Left cardiac atrium (tissue), 4 donors: ENCODE measurements at regions of chr15 and their contacts with region 1.

Region 1: GRCh38 chr15:74460871-74461846 is at the start of gene UBL7:
- DNase-seq: peak; percentile 98
- ATAC-seq: peak; percentile 99
- total RNA-seq, gene UBL7: 39.0 to 43.5 TPM

Region 2: GRCh38 chr15:73522011-73522410 is 939.1 kb before region 1 on chr15:
- intact Hi-C with region 1: no loop called
- DNase-seq: no peak
- ATAC-seq: no peak

Region 3: GRCh38 chr15:74540761-74541493 is 79.8 kb after region 1 on chr15 and contains the start of gene ARID3B:
- intact Hi-C with region 1: loop called in 1 of 2 experiments (anchors 2 kb)
- DNase-seq: peak; percentile 99
- ATAC-seq: peak; percentile 99
- total RNA-seq, gene ARID3B: 2.1 to 2.6 TPM

Region 4: DNA sequence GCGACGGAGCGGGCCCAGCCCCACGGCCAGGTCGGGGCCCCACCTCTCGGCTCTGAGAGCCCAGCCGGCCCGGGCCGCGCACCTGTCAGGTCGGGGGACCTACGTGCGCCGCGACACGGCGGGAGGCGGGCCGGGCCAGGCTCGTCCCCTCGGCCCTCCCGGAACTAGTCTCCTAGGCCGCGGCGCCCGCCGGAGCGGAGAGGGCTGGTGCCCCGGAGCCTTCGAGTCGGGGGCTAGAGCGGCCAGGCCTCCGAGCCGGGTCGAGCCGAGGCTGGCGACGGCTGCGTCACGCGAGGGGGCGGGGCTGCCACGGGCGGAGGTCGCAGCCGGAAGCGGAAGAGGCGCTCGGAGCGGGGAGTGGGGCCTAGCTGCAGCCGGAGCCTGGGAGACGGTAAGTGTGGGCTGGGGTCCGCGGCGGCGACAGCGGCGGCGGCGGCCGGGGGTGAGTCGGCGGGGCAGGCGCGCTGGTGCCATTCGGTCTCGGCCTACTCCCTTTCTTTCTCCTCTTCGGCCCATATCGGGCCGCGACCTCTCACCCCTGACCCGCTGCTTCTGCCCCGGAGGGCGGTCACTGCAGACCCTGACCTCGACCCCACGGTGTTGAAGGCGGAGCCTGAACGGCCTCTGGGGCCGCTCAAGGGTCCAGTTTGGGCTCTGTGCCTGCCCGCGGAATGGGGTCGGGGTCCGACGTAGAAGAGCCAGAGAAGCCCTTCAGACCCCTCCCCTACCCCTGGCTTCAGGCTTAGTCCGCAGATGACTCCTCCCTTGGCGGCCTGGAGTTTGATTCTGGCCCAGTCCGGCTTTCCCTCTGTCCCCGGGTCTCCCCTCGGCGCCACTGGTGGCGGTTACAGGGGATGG is 154.6 kb after region 1 on chr15 and contains the start of gene CLK3:
- intact Hi-C with region 1: loop called in 1 of 2 experiments (anchors 10 kb)
- DNase-seq: peak; percentile 97
- ATAC-seq: peak; percentile 90 to 91
- total RNA-seq, gene CLK3: 44.2 to 44.3 TPM